ENCODE measurements at regions of chr9 and their contacts with region 1.

Region 1: GRCh38 chr9:128159784-128160602 is at the start of gene BBLN:
- DNase-seq: peak; percentile 80 to 98
- H3K4me3 ChIP-seq: peak within 1 kb of the TSS; percentile 70 to 88 (median 79)
- H3K27ac ChIP-seq: peak within 1 kb of the TSS; percentile 66
- H3K4me1 ChIP-seq: peaks cover 0 to 11% (median 1%) of the 10 kb centered on the region in 4 experiments; a peak in 4 of 7 replicates
- H3K27me3 ChIP-seq: no peaks in the 10 kb centered on the region; a peak in 1 of 7 replicates
- CTCF ChIP-seq: no peak
- EP300 ChIP-seq: no peak
- POLR2A ChIP-seq: peak in 1 of 2 experiments; percentile 94; a peak in 2 of 3 replicates
- RAD21 ChIP-seq: no peak
- total RNA-seq, gene BBLN: 63.1 and 66.4 TPM in 2 replicates

Region 2: GRCh38 chr9:128106181-128106890 is 53.7 kb before region 1 on chr9:
- CTCF ChIA-PET with region 1: no interaction called
- POLR2A ChIA-PET with region 1: no interaction called
- DNase-seq: no peak
- H3K4me3 ChIP-seq: no peak overlapping the region
- H3K27ac ChIP-seq: no peak overlapping the region
- H3K4me1 ChIP-seq: peaks cover 0 to 4% (median under 1%) of the 10 kb centered on the region in 4 experiments; a peak in 4 of 7 replicates
- H3K27me3 ChIP-seq: no peaks in the 10 kb centered on the region
- CTCF ChIP-seq: peak in 1 of 3 experiments; percentile 31; a peak in 1 of 4 replicates
- EP300 ChIP-seq: no peak
- POLR2A ChIP-seq: no peak
- RAD21 ChIP-seq: no peak

Region 3: GRCh38 chr9:128175102-128175563 is 15.1 kb after region 1 on chr9:
- CTCF ChIA-PET with region 1: interaction called, 6 read pairs
- POLR2A ChIA-PET with region 1: interaction called, 21 read pairs
- DNase-seq: no peak
- H3K4me3 ChIP-seq: no peak overlapping the region
- H3K27ac ChIP-seq: no peak overlapping the region
- H3K4me1 ChIP-seq: peaks cover 0 to 2% (median 0%) of the 10 kb centered on the region in 4 experiments; a peak in 1 of 7 replicates
- H3K27me3 ChIP-seq: no peaks in the 10 kb centered on the region
- CTCF ChIP-seq: no peak
- EP300 ChIP-seq: no peak
- POLR2A ChIP-seq: no peak
- RAD21 ChIP-seq: no peak

Region 4: DNA sequence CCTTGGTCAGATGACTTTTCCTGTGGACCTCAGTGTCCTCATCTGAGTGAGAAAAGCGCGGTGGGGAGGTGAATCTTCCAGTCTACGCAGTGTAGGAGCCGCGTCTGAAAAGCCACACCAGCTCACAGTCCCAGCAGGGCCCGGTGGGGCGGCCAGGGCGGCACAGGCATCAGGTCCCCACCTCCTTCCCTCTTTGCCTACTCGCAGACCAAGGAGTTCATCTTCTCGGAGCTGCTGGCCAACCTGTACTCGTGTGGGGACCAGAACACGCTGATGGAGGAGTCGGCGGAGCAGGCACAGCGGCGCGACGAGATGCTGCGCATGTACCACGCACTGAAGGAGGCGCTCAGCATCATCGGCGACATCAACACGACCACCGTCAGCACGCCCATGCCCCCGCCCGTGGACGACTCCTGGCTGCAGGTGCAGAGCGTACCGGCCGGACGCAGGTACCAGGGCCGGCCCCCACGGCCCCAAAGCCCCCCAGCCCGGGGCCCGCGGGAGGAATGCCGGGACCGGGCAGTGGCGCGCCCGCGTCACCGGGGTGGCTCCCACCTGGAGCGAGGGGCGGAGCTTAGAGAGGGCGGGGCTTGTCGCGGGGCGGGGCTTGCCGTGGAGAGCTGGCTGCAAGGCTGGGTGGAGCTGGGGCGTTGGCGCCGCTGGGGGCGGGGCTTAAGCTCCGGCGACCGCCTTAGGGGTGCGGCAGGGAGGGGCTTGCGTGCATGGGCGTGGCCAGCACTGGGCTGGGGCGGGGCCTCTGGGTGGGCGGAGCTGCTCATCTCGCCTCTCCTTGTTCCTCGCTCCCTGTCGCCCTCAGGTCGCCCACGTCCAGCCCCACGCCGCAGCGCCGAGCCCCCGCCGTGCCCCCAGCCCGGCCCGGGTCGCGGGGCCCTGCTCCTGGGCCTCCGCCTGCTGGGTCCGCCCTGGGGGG is 90.2 kb after region 1 on chr9:
- CTCF ChIA-PET with region 1: interaction called, 3 read pairs
- POLR2A ChIA-PET with region 1: interaction called, 10 read pairs
- DNase-seq: peak; percentile 93 to 100
- H3K4me3 ChIP-seq: peak overlapping the region; percentile 59 to 83 (median 63)
- H3K27ac ChIP-seq: no peak overlapping the region
- H3K4me1 ChIP-seq: peaks cover 7 to 10% (median 9%) of the 10 kb centered on the region in 4 experiments
- H3K27me3 ChIP-seq: no peaks in the 10 kb centered on the region; a peak in 1 of 7 replicates
- CTCF ChIP-seq: no peak
- EP300 ChIP-seq: peak in 1 of 2 experiments; percentile 29; a peak in 1 of 3 replicates
- POLR2A ChIP-seq: peak in 1 of 2 experiments; percentile 60; a peak in 2 of 3 replicates
- RAD21 ChIP-seq: no peak